GM10248 (cell line): ENCODE measurements at regions of chr17 and their contacts with region 1.

Region 1: GRCh38 chr17:51046514-51047384 is 73.9 kb downstream of the SPAG9 start:
- DNase-seq: peak; percentile 25
- CTCF ChIP-seq: no peak

Region 2: DNA sequence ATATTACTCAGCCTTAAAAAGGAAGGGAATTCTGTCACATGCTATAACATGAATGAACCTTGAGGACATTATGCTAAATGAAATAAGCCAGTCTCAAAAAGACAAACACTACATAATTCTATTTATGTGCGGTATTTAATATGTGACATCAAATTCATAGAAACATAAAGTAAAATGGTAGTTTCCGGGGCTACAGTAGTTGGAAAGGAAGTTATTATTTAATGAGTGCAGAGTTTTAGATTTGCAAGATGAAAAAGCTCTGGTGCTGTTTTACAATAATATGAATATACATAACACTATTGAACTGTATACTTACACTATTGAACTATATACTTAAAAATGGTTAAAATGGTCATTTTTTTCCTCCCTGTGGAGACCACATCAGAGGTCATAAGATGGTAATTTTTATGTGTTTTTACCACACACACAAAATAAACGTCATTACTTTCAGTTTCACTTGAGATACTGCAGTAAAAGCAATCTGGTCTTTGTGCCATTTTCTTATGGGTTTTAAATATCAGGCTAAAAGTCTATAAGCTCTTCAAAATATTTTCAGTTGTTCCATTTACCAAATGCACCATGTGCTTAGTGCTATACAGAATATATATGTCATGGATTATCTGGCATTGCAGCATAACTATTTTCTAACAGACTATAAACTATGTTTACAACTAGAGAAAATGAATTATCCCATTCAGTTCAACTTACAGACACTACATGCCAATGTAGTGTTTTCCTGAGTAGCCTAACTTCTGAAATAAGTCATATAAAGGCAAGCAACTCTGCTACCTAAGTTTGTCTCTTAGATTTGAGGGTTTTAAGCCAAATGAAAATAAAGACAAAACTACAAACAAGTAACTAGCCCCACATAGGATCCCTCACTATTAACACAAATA is 16.9 kb before region 1 on chr17:
- CTCF ChIA-PET with region 1: interaction called, 16 read pairs
- POLR2A ChIA-PET with region 1: interaction called, 5 read pairs
- DNase-seq: peak; percentile 28
- CTCF ChIP-seq: no peak

Region 3: GRCh38 chr17:51035431-51035830 is 11.3 kb before region 1 on chr17:
- CTCF ChIA-PET with region 1: interaction called, 16 read pairs
- POLR2A ChIA-PET with region 1: interaction called, 5 read pairs
- DNase-seq: no peak
- CTCF ChIP-seq: no peak

Region 4: GRCh38 chr17:51056813-51057510 is 10.2 kb after region 1 on chr17:
- CTCF ChIA-PET with region 1: interaction called, 22 read pairs
- POLR2A ChIA-PET with region 1: no interaction called
- DNase-seq: peak; percentile 49
- CTCF ChIP-seq: peak; percentile 65